ENCODE measurements at regions of chr7 and their contacts with region 1.

Region 1: DNA sequence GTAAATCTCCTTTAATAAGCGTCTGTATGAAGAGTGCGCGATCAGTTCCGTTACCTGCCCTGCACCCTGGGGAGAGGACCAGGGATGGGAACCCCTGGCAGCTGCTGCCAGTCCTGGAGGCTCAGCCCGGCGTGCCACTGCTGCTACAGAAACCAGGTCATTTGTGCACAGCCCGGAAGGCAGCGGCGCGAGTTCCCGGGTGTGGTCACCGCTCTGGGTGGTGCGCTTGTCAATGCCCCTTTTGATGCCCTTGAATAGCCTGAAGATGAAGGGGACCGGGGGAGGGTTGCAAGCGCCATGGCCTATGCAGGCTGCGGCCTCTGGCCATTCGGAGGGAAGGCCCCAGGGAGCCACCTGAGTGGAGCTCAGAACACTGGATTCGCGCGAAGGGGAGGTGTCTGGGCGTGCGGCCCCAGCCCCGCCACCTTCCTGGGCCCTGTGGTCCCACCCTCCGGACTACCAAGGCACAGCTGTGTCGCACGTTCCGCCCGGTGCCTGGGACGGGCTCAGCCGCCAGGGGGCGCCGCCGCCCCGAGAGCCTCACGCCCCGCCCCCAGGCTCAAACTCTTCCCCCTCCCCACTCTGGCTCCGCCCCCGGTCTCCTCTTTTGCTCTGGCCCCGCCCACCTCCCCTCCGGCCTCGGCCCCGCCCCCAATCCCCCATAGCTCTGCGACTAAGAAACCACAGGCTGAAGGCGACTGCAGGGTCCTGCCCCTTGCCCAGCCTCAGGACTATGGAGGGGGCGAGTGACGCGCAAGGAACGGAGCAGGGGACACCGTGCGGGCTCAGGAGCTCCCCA is 16.5 kb downstream of the AP5Z1 start:
- DNase-seq: peak; percentile 96
- H3K4me3 ChIP-seq: no peak overlapping the region; a peak in 1 of 4 replicates
- H3K27ac ChIP-seq: no peak overlapping the region
- H3K4me1 ChIP-seq: no peaks in the 10 kb centered on the region
- H3K27me3 ChIP-seq: no peaks in the 10 kb centered on the region
- CTCF ChIP-seq: peak; percentile 61
- EP300 ChIP-seq: no peak
- RAD21 ChIP-seq: no peak

Region 2: DNA sequence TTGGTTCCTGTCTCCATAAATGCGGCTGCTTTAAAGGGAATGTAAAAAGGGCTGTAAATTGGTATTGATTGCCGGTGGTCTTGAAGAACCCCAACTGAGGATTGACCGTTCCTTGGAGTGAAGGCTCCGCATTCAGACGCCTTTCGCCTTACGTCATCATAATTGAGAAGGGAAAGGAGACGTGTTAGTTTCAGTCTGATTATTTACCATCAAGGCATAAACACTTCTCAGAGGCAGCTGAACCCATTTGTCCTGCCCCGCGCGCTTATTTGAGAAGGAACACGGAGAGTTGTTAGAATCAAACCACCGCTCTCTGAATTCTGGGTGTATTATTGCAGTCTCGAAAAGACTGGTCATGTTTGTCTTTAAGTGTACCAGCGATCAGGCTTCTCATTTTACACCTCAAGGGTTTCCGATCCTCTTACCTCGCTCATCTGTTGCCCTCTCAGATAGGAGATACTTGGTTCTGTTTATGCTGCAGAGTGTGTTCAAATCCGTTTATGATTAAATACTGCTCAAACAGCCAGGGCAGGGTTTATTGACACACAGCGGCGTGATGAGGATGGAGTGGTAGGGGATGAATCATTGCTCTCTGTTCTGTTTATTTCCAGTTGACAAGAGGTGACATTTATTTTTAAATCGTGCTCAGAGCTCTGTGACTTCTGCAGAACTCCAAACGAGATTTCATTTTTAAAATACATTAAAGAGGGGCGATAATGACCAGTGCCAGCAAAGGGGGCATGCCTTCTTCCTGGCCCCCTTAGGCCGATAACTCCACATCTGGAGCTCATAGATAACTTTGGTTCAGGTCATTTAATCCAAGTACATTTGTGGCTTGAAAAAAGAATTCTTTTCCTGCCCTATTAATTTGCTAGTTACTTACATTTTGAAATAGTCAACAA is 79.4 kb before region 1 on chr7:
- CTCF ChIA-PET with region 1: no interaction called
- POLR2A ChIA-PET with region 1: no interaction called
- DNase-seq: peak; percentile 32
- H3K4me3 ChIP-seq: no peak overlapping the region
- H3K27ac ChIP-seq: no peak overlapping the region
- H3K4me1 ChIP-seq: peaks cover 0 to 2% of the 10 kb centered on the region in 2 experiments; a peak in 1 of 4 replicates
- H3K27me3 ChIP-seq: no peaks in the 10 kb centered on the region
- CTCF ChIP-seq: no peak
- EP300 ChIP-seq: no peak
- RAD21 ChIP-seq: no peak

Region 3: DNA sequence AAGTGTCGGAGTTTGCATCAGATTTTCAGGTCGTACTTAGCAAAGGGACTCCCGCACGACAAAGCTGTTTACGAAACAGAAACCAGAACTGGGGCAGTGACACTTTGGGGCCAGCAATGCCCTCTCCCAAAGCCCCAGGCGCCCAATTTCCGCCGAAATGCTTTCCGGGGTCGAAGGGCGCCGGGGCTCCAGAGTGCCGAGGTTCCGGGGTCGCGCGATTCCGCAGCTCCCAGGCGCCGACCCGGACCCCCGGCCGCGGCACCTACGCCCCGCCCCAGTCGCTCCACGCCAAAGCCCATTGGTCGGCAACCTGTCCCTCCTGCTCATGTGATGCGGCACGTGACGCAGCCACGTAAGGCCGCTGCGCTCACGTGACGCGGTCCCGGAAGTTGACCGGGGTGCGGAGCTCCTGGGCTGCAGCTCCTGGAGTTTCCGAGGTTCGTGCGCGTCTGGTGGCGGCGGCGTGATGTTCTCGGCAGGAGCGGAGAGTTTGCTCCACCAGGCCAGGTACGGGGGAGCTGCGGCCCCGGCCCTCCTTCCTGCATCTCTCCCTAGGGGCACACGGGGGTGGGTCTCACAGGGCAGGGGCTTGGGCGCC is 16.6 kb before region 1 on chr7 and contains the start of gene AP5Z1:
- CTCF ChIA-PET with region 1: interaction called, 14 read pairs
- POLR2A ChIA-PET with region 1: interaction called, 9 read pairs
- DNase-seq: peak; percentile 100
- H3K4me3 ChIP-seq: peak within 1 kb of the TSS; percentile 84 to 99
- H3K27ac ChIP-seq: peak within 1 kb of the TSS; percentile 87 to 89
- H3K4me1 ChIP-seq: peaks cover 9 to 18% of the 10 kb centered on the region in 2 experiments; a peak in 1 of 4 replicates
- H3K27me3 ChIP-seq: no peaks in the 10 kb centered on the region
- CTCF ChIP-seq: 0 out of 2 replicates have a peak, but pooled peaks have one; percentile 7
- EP300 ChIP-seq: peak in 1 of 2 experiments; percentile 24; a peak in 2 of 4 replicates
- RAD21 ChIP-seq: no peak
- polyA plus RNA-seq, gene AP5Z1: 29.5 and 36.7 TPM in 2 replicates